Posterior cingulate gyrus (tissue), 11 donors: ENCODE measurements at regions of chr12 and their contacts with region 1.

Region 1: GRCh38 chr12:76621582-76622024 is 62.0 kb upstream of the OSBPL8 start:
- DNase-seq: peak in 7 of 10 donors; percentile 23 to 89 (median 70)

Region 2: GRCh38 chr12:76790564-76791552 is 169.3 kb after region 1 on chr12:
- intact Hi-C with region 1: loop called (anchors 1 kb)
- DNase-seq: no peak

Region 3: DNA sequence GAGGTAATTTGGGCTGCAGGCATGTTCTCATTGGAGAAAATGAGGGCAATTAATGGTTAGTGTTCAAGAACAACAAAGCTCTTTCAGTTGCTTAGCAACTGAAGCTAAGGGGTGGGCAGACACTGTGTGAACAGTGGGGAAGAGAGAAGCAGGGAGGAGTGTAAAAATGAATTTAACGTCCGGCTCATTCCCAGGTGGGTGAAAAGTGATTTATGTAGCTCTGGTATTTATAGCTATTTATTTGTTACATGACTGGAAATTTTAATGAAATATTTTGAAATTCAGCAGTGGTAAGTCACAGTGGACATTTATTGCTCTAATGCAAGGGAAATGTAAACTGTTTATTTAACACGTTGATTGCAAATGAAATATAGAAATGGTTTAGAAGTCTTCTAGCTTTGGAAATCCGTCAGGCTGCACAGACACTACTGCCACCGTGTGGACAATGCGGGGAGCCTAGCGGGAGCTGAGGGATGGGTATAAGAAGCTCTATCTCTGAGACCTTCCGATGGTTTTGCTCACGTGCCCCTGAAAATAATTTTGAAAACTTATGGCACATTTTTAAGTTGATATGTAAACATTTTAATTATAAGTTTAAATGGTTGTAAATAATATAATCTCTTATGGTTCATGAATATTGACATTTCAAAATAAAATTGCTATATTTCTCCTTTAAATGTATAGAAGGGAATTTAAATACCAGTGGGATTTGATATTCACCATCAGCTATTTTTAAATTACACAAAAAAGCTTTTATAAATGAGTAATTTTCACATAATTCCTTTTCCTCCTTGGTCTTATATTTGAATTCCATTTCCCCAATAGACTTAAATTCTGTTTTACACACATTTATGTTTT is 389.3 kb after region 1 on chr12:
- intact Hi-C with region 1: loop called (anchors 1 kb)
- DNase-seq: peak; percentile 65 to 97 (median 84)